MCF 10A (cell line): ENCODE measurements at regions of chr2 and their contacts with region 1.

Region 1: GRCh38 chr2:170815746-170816503 is 762 bp upstream of the GAD1 start:
- DNase-seq: peak; percentile 72
- H3K4me3 Mint-ChIP-seq: peak overlapping the region; percentile 81
- H3K27ac Mint-ChIP-seq: no peak overlapping the region
- H3K4me1 Mint-ChIP-seq: peaks cover 6% of the 10 kb centered on the region
- H3K27me3 Mint-ChIP-seq: peaks cover 47% of the 10 kb centered on the region
- CTCF ChIP-seq: peak; percentile 87

Region 2: DNA sequence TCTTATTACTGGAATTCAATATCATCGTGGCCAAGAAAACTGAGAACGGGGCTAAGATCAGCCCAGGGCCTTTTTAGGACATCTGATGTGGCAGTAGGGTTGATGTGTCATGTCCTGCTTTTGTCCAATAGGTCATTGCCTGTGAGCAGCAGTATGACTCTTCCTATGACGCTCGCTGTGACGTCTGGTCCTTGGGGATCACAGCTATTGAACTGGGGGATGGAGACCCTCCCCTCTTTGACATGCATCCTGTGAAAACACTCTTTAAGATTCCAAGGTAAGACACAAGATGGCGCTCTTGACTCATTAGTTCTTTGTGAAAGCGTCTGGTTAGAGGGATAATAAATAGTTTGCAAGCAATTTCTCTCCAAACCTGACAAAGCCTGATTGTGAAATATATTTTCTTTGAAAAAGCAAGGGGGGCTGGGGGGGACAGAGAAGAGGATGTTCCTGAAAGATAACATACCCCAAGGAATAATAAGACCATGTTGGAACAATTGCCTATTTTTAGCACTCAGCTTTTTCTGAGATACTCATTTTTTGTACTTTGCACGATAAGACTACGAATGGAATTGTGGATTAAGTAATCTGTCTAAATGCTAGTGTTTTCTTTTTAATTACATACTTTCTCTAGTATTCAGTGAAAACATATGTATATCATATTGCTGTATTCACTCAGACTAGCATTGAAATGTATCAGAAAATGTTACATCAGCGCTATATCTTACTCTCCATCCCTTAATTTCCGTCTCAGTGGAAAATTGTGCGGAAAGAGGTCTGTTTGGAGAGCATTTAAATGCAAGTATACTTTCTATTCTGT is 579.9 kb before region 1 on chr2:
- CTCF ChIA-PET with region 1: interaction called, 7 read pairs
- POLR2A ChIA-PET with region 1: no interaction called
- intact Hi-C with region 1: loop called (anchors 2 kb)
- DNase-seq: peak; percentile 70
- H3K4me3 Mint-ChIP-seq: no peak overlapping the region
- H3K27ac Mint-ChIP-seq: no peak overlapping the region
- H3K4me1 Mint-ChIP-seq: no peaks in the 10 kb centered on the region
- H3K27me3 Mint-ChIP-seq: peaks cover 41% of the 10 kb centered on the region
- CTCF ChIP-seq: peak; percentile 60

Region 3: DNA sequence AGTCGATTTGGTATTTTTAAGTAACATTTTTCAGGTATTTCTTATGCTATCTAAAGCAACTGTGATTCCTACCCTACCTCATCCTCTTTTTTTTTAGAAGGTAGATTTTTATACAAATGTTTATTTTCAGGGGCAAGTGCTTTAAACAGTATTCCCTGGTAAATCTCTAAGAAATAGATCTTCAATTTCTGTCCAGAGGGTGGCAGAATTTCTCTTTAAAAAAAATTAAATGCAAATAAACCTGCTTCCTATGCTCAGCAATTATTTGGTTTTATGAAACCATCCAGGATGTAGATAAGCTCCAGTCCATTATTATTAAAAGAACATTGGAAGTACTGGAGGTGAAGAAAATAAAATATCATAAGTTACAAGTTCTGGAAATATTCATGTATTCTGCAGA is 446.0 kb before region 1 on chr2:
- CTCF ChIA-PET with region 1: interaction called, 103 read pairs
- POLR2A ChIA-PET with region 1: interaction called, 8 read pairs
- intact Hi-C with region 1: loop called (anchors 1 kb)
- DNase-seq: peak; percentile 32
- H3K4me3 Mint-ChIP-seq: no peak overlapping the region
- H3K27ac Mint-ChIP-seq: no peak overlapping the region
- H3K4me1 Mint-ChIP-seq: peaks cover 8% of the 10 kb centered on the region
- H3K27me3 Mint-ChIP-seq: peaks cover 49% of the 10 kb centered on the region
- CTCF ChIP-seq: no peak

Region 4: GRCh38 chr2:170396799-170397459 is 419.0 kb before region 1 on chr2:
- CTCF ChIA-PET with region 1: interaction called, 52 read pairs
- POLR2A ChIA-PET with region 1: interaction called, 3 read pairs
- intact Hi-C with region 1: loop called (anchors 1 kb)
- DNase-seq: no peak
- H3K4me3 Mint-ChIP-seq: no peak overlapping the region
- H3K27ac Mint-ChIP-seq: no peak overlapping the region
- H3K4me1 Mint-ChIP-seq: no peaks in the 10 kb centered on the region
- H3K27me3 Mint-ChIP-seq: peaks cover 28% of the 10 kb centered on the region
- CTCF ChIP-seq: peak; percentile 44

Region 5: DNA sequence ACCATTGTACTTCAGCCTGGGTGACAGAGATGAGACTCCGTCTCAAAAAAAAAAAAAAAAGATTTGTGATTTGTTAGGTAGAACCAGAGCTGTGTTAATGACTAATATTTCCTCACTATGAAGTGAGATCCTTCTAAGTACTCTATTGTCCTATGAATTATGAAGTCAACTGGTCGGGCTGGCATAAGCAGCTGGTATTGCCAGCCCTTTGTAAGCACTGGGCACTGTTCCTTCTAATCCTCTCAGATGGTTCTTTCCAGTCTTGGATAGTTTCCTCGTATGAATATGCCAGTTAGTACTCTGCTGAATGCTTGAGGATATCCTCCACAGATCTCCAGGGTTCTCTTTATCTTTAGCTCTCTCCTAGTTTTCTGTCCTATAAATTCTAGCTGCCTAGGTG is 323.9 kb before region 1 on chr2:
- CTCF ChIA-PET with region 1: interaction called, 10 read pairs
- POLR2A ChIA-PET with region 1: no interaction called
- intact Hi-C with region 1: no loop called
- DNase-seq: no peak
- H3K4me3 Mint-ChIP-seq: no peak overlapping the region
- H3K27ac Mint-ChIP-seq: no peak overlapping the region
- H3K4me1 Mint-ChIP-seq: no peaks in the 10 kb centered on the region
- H3K27me3 Mint-ChIP-seq: no peaks in the 10 kb centered on the region
- CTCF ChIP-seq: no peak

Region 6: DNA sequence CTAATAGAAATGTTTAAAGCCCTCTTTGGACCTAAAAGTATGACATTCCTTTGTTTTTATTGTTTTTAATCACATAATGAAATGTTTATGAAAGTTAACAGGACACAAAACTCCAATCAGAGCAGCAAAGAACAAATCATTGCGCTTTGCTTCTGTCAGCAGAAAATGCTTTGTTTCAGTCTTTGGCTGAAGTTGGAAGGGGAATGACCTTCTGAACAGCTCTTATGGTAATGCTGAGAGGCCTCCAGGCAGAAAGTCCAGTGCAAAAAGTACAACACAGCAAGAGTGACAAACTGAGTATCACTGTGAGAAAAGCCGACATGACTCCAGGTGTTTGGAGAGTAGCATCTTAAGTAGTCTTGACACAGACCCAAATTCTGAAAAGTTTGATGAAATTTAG is 248.5 kb before region 1 on chr2:
- CTCF ChIA-PET with region 1: no interaction called
- POLR2A ChIA-PET with region 1: no interaction called
- intact Hi-C with region 1: no loop called
- DNase-seq: no peak
- H3K4me3 Mint-ChIP-seq: no peak overlapping the region
- H3K27ac Mint-ChIP-seq: no peak overlapping the region
- H3K4me1 Mint-ChIP-seq: no peaks in the 10 kb centered on the region
- H3K27me3 Mint-ChIP-seq: no peaks in the 10 kb centered on the region
- CTCF ChIP-seq: no peak

Region 7: GRCh38 chr2:170873035-170873692 is 57.2 kb after region 1 on chr2:
- CTCF ChIA-PET with region 1: interaction called, 8 read pairs
- POLR2A ChIA-PET with region 1: interaction called, 7 read pairs
- intact Hi-C with region 1: loop called (anchors 1 kb)
- DNase-seq: peak; percentile 79
- H3K4me3 Mint-ChIP-seq: peak overlapping the region; percentile 70
- H3K27ac Mint-ChIP-seq: no peak overlapping the region
- H3K4me1 Mint-ChIP-seq: peaks cover 15% of the 10 kb centered on the region
- H3K27me3 Mint-ChIP-seq: no peaks in the 10 kb centered on the region
- CTCF ChIP-seq: peak; percentile 76